HepG2 (cell line): ENCODE measurements at regions of chr7 and their contacts with region 1.

Region 1: DNA sequence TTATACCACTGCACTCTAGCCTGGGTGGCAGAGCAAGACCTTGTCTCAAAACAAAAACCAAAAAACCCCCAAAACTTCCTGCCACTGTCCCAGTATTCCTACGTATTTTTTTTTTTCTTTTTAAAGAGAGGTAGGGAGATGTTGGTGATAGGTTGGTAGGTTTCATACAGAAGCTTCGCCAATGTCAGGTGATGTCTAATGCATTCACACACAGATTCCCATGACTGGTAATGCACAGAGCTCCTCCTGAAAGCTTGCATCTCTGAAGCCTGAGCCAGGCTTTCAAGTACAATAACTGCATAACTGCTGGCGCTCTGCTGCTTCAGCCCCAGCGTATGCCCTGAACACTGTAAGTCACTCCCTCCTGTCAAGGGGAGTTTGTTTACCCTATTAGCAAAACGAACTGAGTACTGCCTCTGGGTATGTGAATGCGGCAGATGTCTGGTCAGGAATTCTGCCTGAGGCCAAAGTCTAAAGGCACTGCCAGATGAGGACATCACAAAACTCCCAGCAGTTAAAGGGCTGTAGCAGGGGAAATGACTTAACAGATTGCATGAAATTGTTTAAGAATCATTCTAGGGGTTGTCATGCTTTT is 97.8 kb downstream of the NRCAM start:
- DNase-seq: peak; percentile 98
- ATAC-seq: peak; percentile 100
- H3K4me3 ChIP-seq: no peak overlapping the region; a peak in 1 of 6 replicates
- H3K27ac ChIP-seq: peak overlapping the region; percentile 34
- H3K4me1 ChIP-seq: peaks cover 29% of the 10 kb centered on the region
- H3K27me3 ChIP-seq: no peaks in the 10 kb centered on the region
- CTCF ChIP-seq: 0 out of 2 replicates have a peak, but pooled peaks have one; percentile 21
- EP300 ChIP-seq: peak; percentile 55 to 78; a peak in 3 of 4 replicates
- POLR2A ChIP-seq: no peak
- RAD21 ChIP-seq: peak; percentile 18; the same call in 1 of the 2 replicates

Region 2: GRCh38 chr7:108246227-108246837 is 112.1 kb before region 1 on chr7:
- CTCF ChIA-PET with region 1: no interaction called
- POLR2A ChIA-PET with region 1: no interaction called
- in situ Hi-C with region 1: no loop called
- intact Hi-C with region 1: loop called (anchors 5 kb)
- DNase-seq: peak; percentile 80
- ATAC-seq: peak; percentile 92
- H3K4me3 ChIP-seq: no peak overlapping the region; a peak in 1 of 6 replicates
- H3K27ac ChIP-seq: no peak overlapping the region
- H3K4me1 ChIP-seq: peaks cover 46% of the 10 kb centered on the region
- H3K27me3 ChIP-seq: no peaks in the 10 kb centered on the region
- CTCF ChIP-seq: peak; percentile 50
- EP300 ChIP-seq: no peak
- POLR2A ChIP-seq: no peak
- RAD21 ChIP-seq: no peak

Region 3: DNA sequence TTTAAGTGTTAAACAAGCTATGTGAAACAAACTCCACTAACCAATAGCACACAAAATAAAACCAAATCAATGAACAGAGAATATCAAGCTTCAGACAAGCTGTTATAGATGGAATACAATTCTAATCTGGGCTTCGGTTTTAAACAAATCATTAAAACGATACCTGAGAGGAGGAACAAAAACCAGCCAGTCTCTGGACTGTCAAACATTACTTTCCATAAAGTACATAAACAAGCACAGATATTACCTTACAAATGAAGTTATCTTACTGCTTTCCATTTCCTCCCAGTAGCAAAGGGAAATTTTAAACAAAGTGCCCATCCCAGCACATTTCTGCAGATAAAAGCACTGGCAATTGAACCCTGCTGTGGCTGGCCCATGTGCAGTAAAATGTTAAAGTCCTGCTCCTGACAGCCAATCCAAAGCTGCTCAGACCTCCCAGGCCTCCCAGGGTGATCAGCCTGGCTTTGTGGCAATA is 30.2 kb before region 1 on chr7:
- CTCF ChIA-PET with region 1: no interaction called
- POLR2A ChIA-PET with region 1: no interaction called
- in situ Hi-C with region 1: no loop called
- intact Hi-C with region 1: no loop called
- DNase-seq: no peak
- ATAC-seq: peak; percentile 44; the same call in 1 of the 3 replicates
- H3K4me3 ChIP-seq: no peak overlapping the region
- H3K27ac ChIP-seq: no peak overlapping the region
- H3K4me1 ChIP-seq: no peaks in the 10 kb centered on the region
- H3K27me3 ChIP-seq: no peaks in the 10 kb centered on the region
- CTCF ChIP-seq: no peak
- EP300 ChIP-seq: no peak
- POLR2A ChIP-seq: no peak
- RAD21 ChIP-seq: no peak

Region 4: DNA sequence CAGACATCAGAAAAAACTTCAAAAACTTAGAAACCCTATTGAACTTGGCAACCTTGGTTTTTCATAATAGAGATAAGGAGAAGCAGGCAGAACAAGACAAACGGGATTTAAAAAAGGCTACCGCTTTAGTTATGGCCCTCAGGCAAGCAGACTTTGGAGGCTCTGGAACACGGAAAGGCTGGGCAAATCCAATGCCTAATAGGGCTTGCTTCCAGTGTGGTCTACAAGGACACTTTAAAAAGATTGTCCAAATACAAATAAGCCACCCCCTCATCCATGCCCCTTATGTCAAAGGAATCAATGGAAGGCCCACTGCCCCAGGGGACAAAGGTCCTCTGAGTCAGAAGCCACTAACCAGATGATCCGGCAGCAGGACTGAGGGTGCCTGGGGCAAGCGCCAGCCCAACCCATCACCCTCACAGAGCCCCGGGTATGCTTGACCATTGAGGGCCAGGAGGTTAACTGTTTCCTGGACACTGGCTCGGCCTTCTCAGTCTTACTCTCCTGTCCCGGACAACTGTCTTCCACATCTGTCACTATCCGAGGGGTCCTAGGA is 17.5 kb before region 1 on chr7:
- CTCF ChIA-PET with region 1: no interaction called
- POLR2A ChIA-PET with region 1: no interaction called
- in situ Hi-C with region 1: no loop called
- intact Hi-C with region 1: loop called (anchors 2 kb)
- DNase-seq: peak; percentile 69
- ATAC-seq: peak; percentile 30; the same call in 1 of the 3 replicates
- H3K4me3 ChIP-seq: 0 out of 6 replicates have a peak overlapping the region, but pooled peaks of 1 of the 3 experiments have one; percentile 6
- H3K27ac ChIP-seq: no peak overlapping the region
- H3K4me1 ChIP-seq: peaks cover 18% of the 10 kb centered on the region
- H3K27me3 ChIP-seq: no peaks in the 10 kb centered on the region
- CTCF ChIP-seq: no peak
- EP300 ChIP-seq: no peak; a peak in 1 of 4 replicates
- POLR2A ChIP-seq: no peak
- RAD21 ChIP-seq: peak; percentile 31; the same call in 1 of the 2 replicates